ENCODE measurements at regions of chr1 and their contacts with region 1.

Region 1: GRCh38 chr1:46223472-46223943 is 20.4 kb downstream of the LURAP1 start:
- DNase-seq: peak in 8 of 9 experiments; percentile 38 to 79 (median 60)
- ATAC-seq: peak; percentile 94
- H3K4me3 ChIP-seq: no peak overlapping the region
- H3K4me3 Mint-ChIP-seq: no peak overlapping the region
- H3K27ac ChIP-seq: no peak overlapping the region
- H3K27ac Mint-ChIP-seq: no peak overlapping the region
- H3K4me1 ChIP-seq: no peaks in the 10 kb centered on the region
- H3K4me1 Mint-ChIP-seq: peaks cover 4% of the 10 kb centered on the region
- H3K27me3 ChIP-seq: no peaks in the 10 kb centered on the region
- H3K27me3 Mint-ChIP-seq: no peaks in the 10 kb centered on the region
- CTCF ChIP-seq: peak; percentile 73

Region 2: GRCh38 chr1:46036894-46037839 is 186.3 kb before region 1 on chr1:
- CTCF ChIA-PET with region 1: interaction called, 36 read pairs
- POLR2A ChIA-PET with region 1: no interaction called
- intact Hi-C with region 1: loop called (anchors 1 kb)
- DNase-seq: peak; percentile 77 to 94 (median 85)
- ATAC-seq: peak; percentile 71
- H3K4me3 ChIP-seq: no peak overlapping the region
- H3K4me3 Mint-ChIP-seq: no peak overlapping the region
- H3K27ac ChIP-seq: no peak overlapping the region
- H3K27ac Mint-ChIP-seq: no peak overlapping the region
- H3K4me1 ChIP-seq: no peaks in the 10 kb centered on the region
- H3K4me1 Mint-ChIP-seq: no peaks in the 10 kb centered on the region
- H3K27me3 ChIP-seq: no peaks in the 10 kb centered on the region
- H3K27me3 Mint-ChIP-seq: no peaks in the 10 kb centered on the region
- CTCF ChIP-seq: peak; percentile 97

Region 3: DNA sequence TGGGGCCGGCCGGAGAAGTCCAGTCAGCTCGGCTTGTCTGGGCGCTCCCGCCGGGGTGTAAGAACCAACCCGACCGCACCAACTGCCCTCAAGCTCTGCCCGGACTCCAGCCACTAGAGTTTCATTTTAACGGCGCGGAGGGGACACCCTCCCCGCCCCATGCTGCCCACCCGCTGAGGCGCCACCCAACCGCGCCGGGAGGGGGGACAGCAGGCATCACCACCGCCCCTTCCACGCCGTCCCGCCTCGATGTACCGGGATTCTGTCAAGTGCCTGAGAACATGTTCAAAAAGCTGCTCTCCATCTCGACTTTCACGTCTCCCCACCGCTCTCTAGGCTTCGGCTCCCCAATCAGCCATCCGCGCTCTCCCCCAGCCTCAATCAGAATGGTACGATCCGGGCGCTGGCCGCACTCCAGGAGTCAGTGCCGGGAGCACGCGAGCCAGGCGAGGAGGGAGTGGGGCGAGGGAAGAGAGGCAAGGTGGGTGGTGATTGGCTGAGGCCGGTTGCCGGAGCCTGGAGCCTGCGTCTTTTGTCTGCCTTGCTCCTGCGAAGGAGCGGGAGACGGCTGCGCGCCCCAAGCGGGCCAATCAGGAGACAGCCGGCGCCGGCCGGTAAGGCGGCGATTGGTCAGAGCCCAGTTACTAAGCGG is 90.9 kb before region 1 on chr1 and contains the start of gene PIK3R3:
- CTCF ChIA-PET with region 1: no interaction called
- POLR2A ChIA-PET with region 1: no interaction called
- intact Hi-C with region 1: no loop called
- DNase-seq: peak; percentile 54 to 96 (median 80)
- ATAC-seq: peak; percentile 85
- H3K4me3 ChIP-seq: peak within 1 kb of the TSS; percentile 75 to 91
- H3K4me3 Mint-ChIP-seq: peak within 1 kb of the TSS; percentile 97
- H3K27ac ChIP-seq: peak within 1 kb of the TSS; percentile 49 to 94
- H3K27ac Mint-ChIP-seq: peak within 1 kb of the TSS; percentile 93
- H3K4me1 ChIP-seq: peaks cover 7% of the 10 kb centered on the region
- H3K4me1 Mint-ChIP-seq: peaks cover 24% of the 10 kb centered on the region
- H3K27me3 ChIP-seq: peaks cover 0 to 6% of the 10 kb centered on the region in 2 experiments
- H3K27me3 Mint-ChIP-seq: peaks cover 39% of the 10 kb centered on the region
- CTCF ChIP-seq: no peak
- total RNA-seq, gene PIK3R3: 0.71 to 0.94 TPM

Region 4: DNA sequence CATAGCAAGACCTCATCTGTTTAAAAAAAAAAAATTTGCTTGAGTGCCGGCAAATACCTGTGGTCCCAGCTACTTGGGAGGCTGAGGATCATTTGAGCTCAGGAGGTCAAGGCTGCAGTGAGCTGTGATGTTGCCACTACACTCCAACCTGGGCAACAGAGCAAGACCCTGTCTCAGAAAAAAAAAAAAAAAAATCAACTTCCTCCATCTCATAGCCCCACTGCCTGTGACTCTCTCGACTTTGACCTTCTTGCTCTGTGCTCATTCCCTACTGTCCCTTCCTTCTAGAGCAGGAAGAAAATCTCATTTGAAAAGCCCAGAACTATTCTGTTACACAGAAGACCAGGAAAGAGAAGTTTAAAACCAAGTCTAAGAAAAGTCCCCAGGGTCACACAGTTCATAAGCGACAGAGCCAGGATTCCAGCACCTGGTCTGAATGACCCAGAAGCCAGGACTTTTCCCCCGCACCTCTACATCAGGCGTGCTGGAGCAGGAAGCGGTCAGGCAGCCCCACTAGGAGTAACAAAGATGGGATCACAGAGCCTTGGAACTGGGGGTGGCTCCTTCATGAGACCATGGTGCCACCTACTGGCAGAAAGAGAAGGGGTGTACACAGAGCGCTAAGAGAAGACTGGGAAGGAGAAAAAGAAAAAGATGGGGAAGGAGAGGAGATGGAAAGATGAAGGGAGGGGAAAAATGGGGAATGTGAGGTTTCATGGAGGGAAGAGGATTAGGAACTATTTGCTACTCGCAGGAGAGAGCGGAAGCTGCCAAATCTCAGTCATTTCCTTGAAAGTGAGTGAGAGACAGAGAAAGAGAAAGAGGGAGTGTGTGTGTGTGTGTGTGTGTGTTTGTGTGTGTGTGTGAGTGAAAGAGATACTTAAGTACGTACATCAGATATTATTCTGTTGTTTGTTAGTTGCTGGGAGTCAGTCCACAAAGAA is 44.1 kb before region 1 on chr1:
- CTCF ChIA-PET with region 1: interaction called, 3 read pairs
- POLR2A ChIA-PET with region 1: no interaction called
- intact Hi-C with region 1: loop called (anchors 1 to 2 kb)
- DNase-seq: peak; percentile 27 to 82 (median 68)
- ATAC-seq: peak; percentile 84
- H3K4me3 ChIP-seq: no peak overlapping the region
- H3K4me3 Mint-ChIP-seq: no peak overlapping the region
- H3K27ac ChIP-seq: no peak overlapping the region
- H3K27ac Mint-ChIP-seq: no peak overlapping the region
- H3K4me1 ChIP-seq: peaks cover 1% of the 10 kb centered on the region
- H3K4me1 Mint-ChIP-seq: peaks cover 5% of the 10 kb centered on the region
- H3K27me3 ChIP-seq: peaks cover 0 to 2% of the 10 kb centered on the region in 2 experiments
- H3K27me3 Mint-ChIP-seq: no peaks in the 10 kb centered on the region
- CTCF ChIP-seq: peak; percentile 94

Region 5: DNA sequence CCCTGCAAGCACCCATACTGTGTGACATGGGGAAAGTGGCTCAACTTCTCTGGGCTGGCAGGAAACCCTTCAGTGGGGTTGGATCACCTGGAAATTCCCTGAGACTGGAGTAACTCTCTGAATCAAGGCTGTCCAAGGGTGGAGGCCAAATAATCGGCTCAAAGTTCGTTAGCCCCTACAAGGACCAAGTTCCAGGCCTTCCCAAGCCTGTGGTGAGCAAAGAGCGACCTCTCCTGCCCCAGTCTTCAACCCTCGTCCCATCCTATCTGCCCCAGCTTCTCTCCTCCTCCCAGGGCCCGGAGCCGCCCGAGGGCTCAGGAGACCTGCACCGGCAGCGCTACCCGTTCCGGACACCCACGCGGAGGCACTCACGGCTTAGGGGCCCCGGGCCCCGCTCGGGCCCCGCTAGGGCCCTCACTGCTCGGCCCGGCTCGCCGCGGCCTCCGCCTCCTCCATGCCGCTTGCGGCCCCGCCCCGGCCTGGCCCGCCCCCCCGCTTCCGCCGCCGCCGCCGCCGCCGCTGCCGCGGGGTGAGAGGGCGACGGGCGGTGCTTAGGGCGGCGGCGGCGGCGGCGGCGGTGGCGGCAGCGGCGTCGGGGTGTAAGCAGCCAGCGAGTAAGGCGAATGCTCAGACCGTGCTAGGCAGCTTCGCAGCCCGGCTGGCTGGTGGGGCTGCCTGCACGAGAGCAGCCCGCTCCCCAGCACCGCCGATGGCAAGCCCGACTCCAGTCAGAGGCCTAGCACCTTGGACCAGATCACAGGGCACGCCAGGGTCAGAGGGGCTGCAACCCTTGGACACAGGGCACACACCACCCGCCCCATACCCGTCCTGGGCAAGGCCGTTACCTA is 25.3 kb before region 1 on chr1 and contains the start of gene POMGNT1:
- CTCF ChIA-PET with region 1: interaction called, 10 read pairs
- POLR2A ChIA-PET with region 1: no interaction called
- intact Hi-C with region 1: loop called in 1 of 2 experiments (anchors 2 kb)
- DNase-seq: peak; percentile 50 to 86 (median 72)
- ATAC-seq: peak; percentile 93
- H3K4me3 ChIP-seq: peak within 1 kb of the TSS; percentile 75 to 93
- H3K4me3 Mint-ChIP-seq: peak within 1 kb of the TSS; percentile 83
- H3K27ac ChIP-seq: peak within 1 kb of the TSS; percentile 58 to 59
- H3K27ac Mint-ChIP-seq: peak within 1 kb of the TSS; percentile 88
- H3K4me1 ChIP-seq: peaks cover 20% of the 10 kb centered on the region
- H3K4me1 Mint-ChIP-seq: peaks cover 32% of the 10 kb centered on the region
- H3K27me3 ChIP-seq: peaks cover 0 to 3% of the 10 kb centered on the region in 2 experiments
- H3K27me3 Mint-ChIP-seq: no peaks in the 10 kb centered on the region
- CTCF ChIP-seq: no peak
- total RNA-seq, gene POMGNT1: 20.3 to 23.4 TPM

Region 6: DNA sequence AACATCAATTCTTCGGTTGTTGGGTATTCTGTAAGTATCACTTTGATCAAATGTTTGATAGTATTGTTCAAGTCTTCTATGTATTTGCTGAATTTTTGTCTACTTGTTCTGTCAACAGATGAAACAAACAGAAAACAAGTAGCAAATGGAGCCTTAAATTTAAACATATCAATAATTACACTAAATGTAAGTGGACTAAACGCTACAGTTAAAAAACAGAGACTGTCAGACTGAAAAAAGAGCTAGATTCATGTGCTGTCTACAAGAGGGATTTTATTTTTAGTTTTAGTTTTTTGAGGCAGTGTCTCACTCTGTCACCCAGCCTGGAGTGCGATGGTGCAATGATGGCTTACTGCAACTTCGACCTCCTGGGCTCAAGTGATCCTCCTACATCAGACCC is 13.4 kb after region 1 on chr1:
- CTCF ChIA-PET with region 1: interaction called, 17 read pairs
- POLR2A ChIA-PET with region 1: no interaction called
- intact Hi-C with region 1: no loop called
- DNase-seq: no peak
- ATAC-seq: no peak
- H3K4me3 ChIP-seq: no peak overlapping the region
- H3K4me3 Mint-ChIP-seq: no peak overlapping the region
- H3K27ac ChIP-seq: no peak overlapping the region
- H3K27ac Mint-ChIP-seq: no peak overlapping the region
- H3K4me1 ChIP-seq: no peaks in the 10 kb centered on the region
- H3K4me1 Mint-ChIP-seq: no peaks in the 10 kb centered on the region
- H3K27me3 ChIP-seq: no peaks in the 10 kb centered on the region
- H3K27me3 Mint-ChIP-seq: no peaks in the 10 kb centered on the region
- CTCF ChIP-seq: no peak

Region 7: DNA sequence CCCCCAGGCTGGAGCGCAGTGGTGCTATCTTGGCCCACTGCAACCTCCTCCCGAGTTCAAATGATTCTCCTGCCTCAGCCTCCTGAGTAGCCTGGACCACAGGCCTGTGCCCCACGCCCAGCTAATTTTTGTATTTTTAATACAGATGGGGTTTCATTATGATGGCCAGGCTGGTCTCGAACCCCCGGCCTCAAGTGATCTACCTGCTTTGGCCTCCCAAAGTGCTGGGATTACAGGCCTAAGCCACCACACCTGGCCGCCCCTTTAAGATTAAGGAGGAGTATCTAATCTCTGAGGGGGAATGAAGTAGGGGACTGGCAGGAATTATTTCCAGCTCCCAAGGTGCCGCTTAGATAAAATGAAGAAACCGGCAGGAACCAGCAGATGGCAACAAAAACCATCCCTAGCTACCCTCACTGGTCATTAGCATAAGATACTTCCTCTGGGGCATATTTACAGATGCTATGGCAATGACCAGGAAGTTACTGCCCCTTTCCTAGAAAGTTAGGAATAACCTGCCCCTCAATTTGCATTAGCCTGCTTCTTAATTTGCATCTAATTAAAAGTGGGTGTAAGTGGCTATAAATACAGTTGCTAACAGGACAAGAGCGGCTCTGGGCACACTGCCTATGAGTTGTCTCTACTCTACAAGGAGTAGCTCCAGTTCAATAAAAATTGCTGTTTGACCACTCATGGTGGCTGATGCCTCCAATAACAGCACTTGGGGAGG is 110.0 kb after region 1 on chr1:
- CTCF ChIA-PET with region 1: no interaction called
- POLR2A ChIA-PET with region 1: no interaction called
- intact Hi-C with region 1: no loop called
- DNase-seq: peak in 1 of 9 experiments; percentile 16
- ATAC-seq: no peak
- H3K4me3 ChIP-seq: no peak overlapping the region
- H3K4me3 Mint-ChIP-seq: no peak overlapping the region
- H3K27ac ChIP-seq: no peak overlapping the region
- H3K27ac Mint-ChIP-seq: no peak overlapping the region
- H3K4me1 ChIP-seq: no peaks in the 10 kb centered on the region
- H3K4me1 Mint-ChIP-seq: no peaks in the 10 kb centered on the region
- H3K27me3 ChIP-seq: no peaks in the 10 kb centered on the region
- H3K27me3 Mint-ChIP-seq: no peaks in the 10 kb centered on the region
- CTCF ChIP-seq: no peak